HEK293T (cell line): ENCODE measurements at regions of chr12 and their contacts with region 1.

Region 1: GRCh38 chr12:49130151-49131050 is 794 bp downstream of the TUBA1B start:
- DNase-seq: peak; percentile 85

Region 2: DNA sequence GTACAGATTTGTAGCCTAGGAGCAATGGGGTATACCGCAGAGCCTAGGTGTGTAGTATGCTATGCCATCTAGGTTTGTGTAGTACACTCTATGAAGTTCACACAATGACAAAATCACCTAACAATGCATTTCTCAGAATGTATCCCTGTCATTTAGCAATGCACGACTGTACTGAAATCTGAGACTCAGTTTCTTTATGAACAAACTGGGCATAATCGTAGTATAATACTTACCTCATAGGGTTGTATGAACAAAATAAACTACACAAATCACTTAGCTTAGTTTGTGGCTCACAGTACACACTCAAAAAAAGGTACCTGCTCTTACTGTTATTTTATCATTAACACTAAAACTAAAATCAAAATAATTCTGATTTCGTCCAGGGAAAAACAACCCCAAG is 104.9 kb before region 1 on chr12:
- CTCF ChIA-PET with region 1: no interaction called
- POLR2A ChIA-PET with region 1: no interaction called
- DNase-seq: no peak

Region 3: GRCh38 chr12:49069507-49070346 is 60.7 kb before region 1 on chr12 and contains the start of gene RHEBL1:
- CTCF ChIA-PET with region 1: interaction called, 3 read pairs
- POLR2A ChIA-PET with region 1: interaction called, 44 read pairs
- DNase-seq: peak; percentile 96

Region 4: GRCh38 chr12:49110464-49111155 is 19.8 kb before region 1 on chr12 and contains the start of gene LMBR1L:
- CTCF ChIA-PET with region 1: interaction called, 3 read pairs
- POLR2A ChIA-PET with region 1: interaction called, 112 read pairs
- DNase-seq: peak; percentile 98

Region 5: DNA sequence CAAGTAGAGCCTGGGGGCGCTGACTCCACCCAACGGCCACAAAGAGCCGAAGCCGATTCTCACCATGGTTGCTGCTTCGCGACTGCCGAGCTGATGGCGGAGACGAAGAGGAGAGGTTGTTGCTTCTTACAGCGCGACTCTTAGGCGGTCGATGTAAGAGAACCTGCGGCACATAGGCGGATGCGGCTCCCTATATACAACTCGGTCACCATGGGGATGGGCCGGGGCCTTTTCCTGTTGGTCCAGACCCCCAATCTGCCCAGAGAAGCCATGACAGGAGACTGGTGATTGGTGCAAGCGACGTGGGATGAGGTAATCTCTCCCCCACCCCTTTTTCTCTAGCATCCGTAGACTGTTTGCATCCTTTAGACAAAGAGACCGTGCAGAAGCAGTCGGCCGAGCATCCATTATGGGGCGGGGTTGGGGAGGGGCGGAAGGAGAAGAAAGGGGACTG is 58.5 kb after region 1 on chr12 and contains the start of gene TUBA1A:
- CTCF ChIA-PET with region 1: no interaction called
- POLR2A ChIA-PET with region 1: interaction called, 99 read pairs
- DNase-seq: peak; percentile 93

Region 6: DNA sequence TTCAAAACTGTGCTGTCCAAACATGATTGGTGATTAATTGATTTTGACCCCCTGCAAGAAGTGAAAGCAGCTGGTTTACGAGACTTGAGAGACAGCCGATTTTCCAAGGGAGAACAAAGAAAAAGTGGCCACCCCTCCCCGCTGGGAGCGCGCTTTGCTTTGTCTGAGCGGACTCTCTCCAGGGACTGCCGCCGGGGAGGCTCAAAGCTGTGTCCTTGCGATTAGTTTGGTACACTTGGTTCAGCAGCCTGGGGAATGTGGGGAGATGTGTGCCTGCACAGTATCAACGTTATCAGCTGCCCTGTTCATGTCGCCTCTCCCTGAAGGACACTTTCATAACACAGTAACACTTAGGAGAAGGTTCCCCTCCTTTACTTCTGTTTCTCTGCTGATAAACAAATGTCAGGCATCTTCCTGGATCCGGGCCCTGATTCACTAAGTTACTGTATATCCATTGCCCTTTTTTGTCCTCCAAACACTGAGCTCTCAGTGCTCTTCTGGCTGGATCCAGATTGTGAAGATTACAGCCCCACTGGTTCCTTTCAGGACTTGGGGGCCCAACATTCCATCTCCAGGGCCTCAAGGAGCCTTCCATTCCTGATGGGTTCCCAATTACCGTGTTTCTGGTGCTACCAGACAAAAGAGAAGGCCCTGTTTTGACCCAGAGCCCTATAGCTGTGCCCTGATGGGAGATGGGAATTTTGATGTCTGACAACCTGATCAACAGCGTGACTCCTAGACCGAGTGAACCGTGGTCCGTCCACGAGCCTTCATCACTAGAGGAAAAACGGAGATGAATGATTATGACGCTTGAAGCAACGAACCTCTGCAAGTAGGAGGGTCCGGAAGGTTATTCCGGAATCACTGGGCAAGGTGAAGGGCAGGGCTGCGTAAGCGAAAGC is 102.8 kb after region 1 on chr12:
- CTCF ChIA-PET with region 1: interaction called, 7 read pairs
- POLR2A ChIA-PET with region 1: interaction called, 109 read pairs
- DNase-seq: peak; percentile 45

Region 7: DNA sequence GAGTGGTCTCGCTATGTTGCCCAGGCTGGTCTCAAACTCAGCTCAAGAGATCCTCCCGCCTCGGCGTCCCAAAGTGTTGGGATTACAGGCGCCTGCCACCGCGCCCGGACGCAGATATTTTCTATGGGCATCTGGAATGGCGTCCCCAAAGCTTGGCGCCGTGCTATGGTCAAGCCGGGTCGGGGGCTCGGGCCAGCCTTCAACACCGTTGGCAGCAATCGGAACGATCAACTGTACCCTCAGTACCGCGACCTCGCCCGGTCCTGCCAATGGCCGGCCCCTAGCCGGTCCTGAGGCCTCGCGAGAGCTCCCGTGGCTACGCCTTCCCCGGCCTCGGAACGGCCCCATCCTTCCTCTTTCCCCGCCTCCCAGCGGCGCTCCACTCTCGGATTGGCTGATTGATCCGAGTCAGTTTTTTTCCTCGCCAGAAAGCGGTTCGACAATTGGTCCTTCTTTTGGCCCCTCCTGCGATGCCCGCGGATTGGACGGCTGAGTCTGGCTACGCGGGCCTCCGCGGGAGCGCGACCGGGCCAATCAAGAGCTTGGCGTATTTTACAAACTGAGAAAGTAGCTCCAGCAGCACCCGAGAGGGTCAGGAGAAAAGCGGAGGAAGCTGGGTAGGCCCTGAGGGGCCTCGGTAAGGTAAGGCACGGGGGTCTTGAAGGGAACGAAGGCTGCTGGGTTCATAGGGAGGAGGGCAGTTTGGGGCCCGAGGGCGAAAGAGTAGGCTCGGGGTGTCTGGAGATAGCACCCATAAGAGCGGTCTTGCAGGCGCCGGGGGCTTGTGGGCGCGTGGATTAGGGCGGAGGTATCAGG is 192.5 kb after region 1 on chr12 and contains the start of gene TROAP:
- CTCF ChIA-PET with region 1: no interaction called
- POLR2A ChIA-PET with region 1: interaction called, 13 read pairs
- DNase-seq: peak; percentile 97